PC-3 (cell line): ENCODE measurements at regions of chr17 and their contacts with region 1.

Region 1: DNA sequence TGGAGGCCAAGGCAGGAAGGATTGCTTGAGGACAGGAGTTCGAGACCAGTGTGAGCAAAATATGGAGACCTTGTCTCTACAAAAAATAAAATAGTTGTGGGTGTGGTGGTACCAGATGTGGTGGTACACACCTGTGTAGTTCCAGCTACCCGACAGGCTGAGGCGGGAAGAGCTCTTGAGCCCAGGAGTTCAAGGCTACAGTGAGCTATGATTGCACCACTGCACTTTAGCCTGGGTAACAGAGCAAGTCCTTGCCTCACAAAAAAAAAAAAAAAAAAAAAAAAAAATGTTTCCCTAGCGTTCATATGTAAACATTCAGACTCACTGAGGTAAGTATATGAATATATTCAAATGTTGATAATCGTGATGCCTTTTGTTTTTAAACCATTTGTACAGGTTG is 39.5 kb downstream of the CLUH start:
- DNase-seq: no peak
- ATAC-seq: no peak
- H3K4me3 ChIP-seq: no peak overlapping the region
- H3K27ac ChIP-seq: no peak overlapping the region
- H3K4me1 ChIP-seq: no peaks in the 10 kb centered on the region
- H3K27me3 ChIP-seq: no peaks in the 10 kb centered on the region
- CTCF ChIP-seq: no peak

Region 2: GRCh38 chr17:2474371-2474770 is 197.7 kb before region 1 on chr17:
- CTCF ChIA-PET with region 1: no interaction called
- POLR2A ChIA-PET with region 1: no interaction called
- intact Hi-C with region 1: no loop called
- DNase-seq: no peak
- ATAC-seq: no peak
- H3K4me3 ChIP-seq: no peak overlapping the region
- H3K27ac ChIP-seq: no peak overlapping the region
- H3K4me1 ChIP-seq: no peaks in the 10 kb centered on the region
- H3K27me3 ChIP-seq: no peaks in the 10 kb centered on the region
- CTCF ChIP-seq: no peak

Region 3: GRCh38 chr17:2511462-2512369 is 160.3 kb before region 1 on chr17 and contains the start of gene METTL16:
- CTCF ChIA-PET with region 1: no interaction called
- POLR2A ChIA-PET with region 1: no interaction called
- intact Hi-C with region 1: loop called (anchors 10 kb)
- DNase-seq: peak; percentile 95
- ATAC-seq: peak; percentile 98
- H3K4me3 ChIP-seq: peak within 1 kb of the TSS; percentile 90
- H3K27ac ChIP-seq: peak within 1 kb of the TSS; percentile 86
- H3K4me1 ChIP-seq: peaks cover 7% of the 10 kb centered on the region
- H3K27me3 ChIP-seq: no peaks in the 10 kb centered on the region
- CTCF ChIP-seq: no peak
- total RNA-seq, gene METTL16: 20.7 and 20.8 TPM in 2 replicates

Region 4: DNA sequence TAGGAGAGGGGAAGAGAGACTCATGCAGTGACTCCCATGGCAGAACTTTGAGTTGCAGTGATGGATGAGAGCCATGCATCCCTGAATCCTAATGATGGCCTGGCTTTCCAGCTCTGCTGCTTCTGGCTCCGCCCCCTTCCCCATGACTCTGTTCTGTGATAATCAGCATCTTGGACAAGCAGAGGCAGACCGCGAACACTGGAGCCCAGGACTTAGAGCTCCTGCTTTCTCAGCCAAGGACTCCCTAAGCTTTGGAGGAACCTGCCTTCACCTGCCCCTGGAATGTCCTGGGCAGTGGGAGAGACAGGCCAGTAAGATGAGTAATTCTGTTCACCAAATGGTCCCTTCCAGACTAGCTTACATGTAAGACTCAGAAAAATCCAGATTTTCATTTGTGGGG is 64.9 kb after region 1 on chr17:
- CTCF ChIA-PET with region 1: no interaction called
- POLR2A ChIA-PET with region 1: no interaction called
- intact Hi-C with region 1: no loop called
- DNase-seq: no peak
- ATAC-seq: no peak
- H3K4me3 ChIP-seq: no peak overlapping the region
- H3K27ac ChIP-seq: no peak overlapping the region
- H3K4me1 ChIP-seq: no peaks in the 10 kb centered on the region
- H3K27me3 ChIP-seq: no peaks in the 10 kb centered on the region
- CTCF ChIP-seq: no peak